ENCODE measurements at regions of chr6 and their contacts with region 1.

Region 1: DNA sequence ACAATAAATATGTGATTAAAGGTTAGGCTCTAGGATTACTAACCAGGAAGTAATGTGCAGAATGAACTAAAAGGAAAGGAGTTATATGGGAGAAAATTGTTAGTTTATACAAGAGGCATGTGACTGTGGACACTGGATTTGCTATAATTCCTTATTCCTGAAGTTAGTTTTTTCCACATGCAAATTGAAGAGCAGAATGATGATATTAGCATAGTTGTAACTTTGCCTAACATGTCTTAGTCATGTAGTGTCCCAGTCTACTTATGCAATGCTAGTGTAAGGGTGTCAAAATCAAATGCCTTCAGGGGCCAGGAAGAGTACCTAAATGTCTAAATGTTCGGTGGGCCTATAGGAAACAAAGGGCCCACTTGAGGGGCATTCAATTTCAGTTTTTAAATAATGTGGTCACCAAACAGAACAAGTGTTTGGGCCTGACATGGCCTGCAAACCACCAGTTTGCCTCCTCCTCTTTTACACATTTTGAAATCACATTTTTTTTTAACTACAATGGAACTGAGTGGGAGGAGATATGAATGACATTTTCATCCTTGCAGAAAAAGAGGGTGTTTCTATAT is 28.0 kb upstream of the CEP85L start:
- DNase-seq: no peak
- H3K4me3 Mint-ChIP-seq: no peak overlapping the region
- H3K27ac Mint-ChIP-seq: peak overlapping the region; percentile 43
- H3K4me1 Mint-ChIP-seq: peaks cover 45% of the 10 kb centered on the region
- H3K27me3 Mint-ChIP-seq: no peaks in the 10 kb centered on the region

Region 2: DNA sequence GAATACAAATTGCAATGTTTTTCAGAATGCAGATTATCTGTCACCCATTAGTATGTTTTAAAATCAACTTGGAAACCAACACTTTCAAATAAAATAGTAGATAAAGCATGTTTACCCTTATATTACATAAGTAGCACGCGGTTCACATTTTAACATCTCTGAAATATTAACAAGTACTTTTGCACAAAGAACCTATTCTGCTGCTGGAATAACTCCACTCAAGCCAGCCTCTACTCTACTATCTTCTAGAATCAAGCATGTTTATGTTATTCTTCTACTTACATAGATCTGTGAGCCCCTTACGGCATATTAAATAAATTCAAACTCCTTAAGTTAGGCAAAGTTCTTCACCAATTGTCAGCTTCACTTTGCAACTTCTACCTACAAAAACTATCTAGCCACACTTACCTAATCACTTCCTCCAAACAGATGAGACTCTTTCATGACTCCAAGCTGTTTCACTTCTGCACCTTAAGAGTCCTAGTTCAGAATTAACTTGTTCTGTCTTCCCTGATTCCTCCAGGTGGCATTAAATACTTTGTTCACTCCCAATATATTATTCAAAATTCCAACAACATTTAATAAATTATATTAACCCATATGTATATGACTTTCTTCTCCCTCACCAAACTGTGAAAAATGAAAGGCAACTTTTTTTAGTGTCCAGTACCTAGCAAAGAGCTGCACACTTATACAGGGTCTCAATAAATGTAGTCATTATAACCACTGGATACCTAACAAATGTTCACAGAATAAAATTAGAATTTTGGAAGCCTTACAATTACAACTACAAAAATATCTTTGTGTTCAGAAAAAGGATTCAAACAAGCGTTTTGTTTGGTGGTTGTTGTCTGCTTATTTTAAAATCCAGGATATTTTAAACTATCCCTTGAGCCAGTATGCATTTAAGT is 40.1 kb before region 1 on chr6:
- CTCF ChIA-PET with region 1: no interaction called
- POLR2A ChIA-PET with region 1: no interaction called
- intact Hi-C with region 1: no loop called
- DNase-seq: no peak
- H3K4me3 Mint-ChIP-seq: no peak overlapping the region
- H3K27ac Mint-ChIP-seq: no peak overlapping the region
- H3K4me1 Mint-ChIP-seq: peaks cover 56% of the 10 kb centered on the region
- H3K27me3 Mint-ChIP-seq: no peaks in the 10 kb centered on the region

Region 3: GRCh38 chr6:118660218-118660569 is 19.2 kb before region 1 on chr6:
- CTCF ChIA-PET with region 1: interaction called, 3 read pairs
- POLR2A ChIA-PET with region 1: interaction called, 3 read pairs
- intact Hi-C with region 1: loop called (anchors 2 kb)
- DNase-seq: peak; percentile 54
- H3K4me3 Mint-ChIP-seq: peak overlapping the region; percentile 33
- H3K27ac Mint-ChIP-seq: peak overlapping the region; percentile 82
- H3K4me1 Mint-ChIP-seq: peaks cover 68% of the 10 kb centered on the region
- H3K27me3 Mint-ChIP-seq: no peaks in the 10 kb centered on the region

Region 4: DNA sequence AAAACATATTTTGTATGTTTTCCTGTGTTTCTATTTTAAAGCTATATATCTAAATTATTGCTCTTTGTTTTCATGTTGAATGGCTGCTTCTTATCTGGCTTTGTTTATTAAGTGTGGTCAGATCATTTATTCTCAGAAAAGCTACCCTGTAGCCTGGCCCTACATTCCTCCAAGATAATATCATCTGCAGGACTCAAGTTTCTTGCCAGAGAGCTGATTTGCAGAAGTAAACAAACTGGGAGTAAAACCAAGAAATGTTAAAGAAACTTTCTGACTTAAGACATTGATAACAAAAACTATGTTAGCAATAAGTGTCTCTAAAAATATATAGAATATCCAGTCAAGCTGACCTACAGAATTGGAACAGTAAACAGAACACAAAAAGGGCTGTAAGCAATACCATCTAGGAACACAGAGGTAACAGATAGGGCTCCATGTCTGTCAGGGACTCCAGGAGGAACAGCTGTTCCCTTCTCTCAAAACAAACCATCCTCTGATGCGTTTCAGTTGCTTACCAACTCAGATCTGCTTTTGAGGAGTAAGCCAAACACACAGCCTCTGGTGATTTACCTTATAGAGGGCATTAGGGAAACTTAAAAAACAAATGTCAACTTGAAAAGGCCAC is 10.5 kb before region 1 on chr6:
- CTCF ChIA-PET with region 1: interaction called, 3 read pairs
- POLR2A ChIA-PET with region 1: interaction called, 4 read pairs
- intact Hi-C with region 1: loop called (anchors 1 kb)
- DNase-seq: no peak
- H3K4me3 Mint-ChIP-seq: no peak overlapping the region
- H3K27ac Mint-ChIP-seq: no peak overlapping the region
- H3K4me1 Mint-ChIP-seq: peaks cover 79% of the 10 kb centered on the region
- H3K27me3 Mint-ChIP-seq: no peaks in the 10 kb centered on the region

Region 5: DNA sequence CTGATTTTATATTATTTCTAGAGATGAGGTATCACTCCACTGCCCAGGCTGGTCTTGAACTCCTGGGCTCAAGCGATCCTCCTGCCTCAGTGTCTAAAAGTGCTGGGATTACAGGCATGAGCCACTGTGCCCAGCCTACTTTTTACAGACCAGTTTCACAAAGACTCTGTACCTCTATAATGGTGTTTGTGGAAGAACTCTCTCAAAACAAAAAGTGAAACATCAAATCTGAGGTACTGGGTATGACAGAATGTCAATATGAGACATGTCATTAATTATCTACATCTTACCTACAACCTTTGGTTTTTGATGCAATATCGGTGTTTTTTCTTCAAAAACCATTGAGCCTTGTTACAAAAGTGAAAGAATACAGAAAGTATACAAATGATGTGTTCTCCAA is 304.9 kb after region 1 on chr6:
- CTCF ChIA-PET with region 1: no interaction called
- POLR2A ChIA-PET with region 1: no interaction called
- intact Hi-C with region 1: no loop called
- DNase-seq: no peak
- H3K4me3 Mint-ChIP-seq: no peak overlapping the region
- H3K27ac Mint-ChIP-seq: no peak overlapping the region
- H3K4me1 Mint-ChIP-seq: no peaks in the 10 kb centered on the region
- H3K27me3 Mint-ChIP-seq: no peaks in the 10 kb centered on the region

Region 6: DNA sequence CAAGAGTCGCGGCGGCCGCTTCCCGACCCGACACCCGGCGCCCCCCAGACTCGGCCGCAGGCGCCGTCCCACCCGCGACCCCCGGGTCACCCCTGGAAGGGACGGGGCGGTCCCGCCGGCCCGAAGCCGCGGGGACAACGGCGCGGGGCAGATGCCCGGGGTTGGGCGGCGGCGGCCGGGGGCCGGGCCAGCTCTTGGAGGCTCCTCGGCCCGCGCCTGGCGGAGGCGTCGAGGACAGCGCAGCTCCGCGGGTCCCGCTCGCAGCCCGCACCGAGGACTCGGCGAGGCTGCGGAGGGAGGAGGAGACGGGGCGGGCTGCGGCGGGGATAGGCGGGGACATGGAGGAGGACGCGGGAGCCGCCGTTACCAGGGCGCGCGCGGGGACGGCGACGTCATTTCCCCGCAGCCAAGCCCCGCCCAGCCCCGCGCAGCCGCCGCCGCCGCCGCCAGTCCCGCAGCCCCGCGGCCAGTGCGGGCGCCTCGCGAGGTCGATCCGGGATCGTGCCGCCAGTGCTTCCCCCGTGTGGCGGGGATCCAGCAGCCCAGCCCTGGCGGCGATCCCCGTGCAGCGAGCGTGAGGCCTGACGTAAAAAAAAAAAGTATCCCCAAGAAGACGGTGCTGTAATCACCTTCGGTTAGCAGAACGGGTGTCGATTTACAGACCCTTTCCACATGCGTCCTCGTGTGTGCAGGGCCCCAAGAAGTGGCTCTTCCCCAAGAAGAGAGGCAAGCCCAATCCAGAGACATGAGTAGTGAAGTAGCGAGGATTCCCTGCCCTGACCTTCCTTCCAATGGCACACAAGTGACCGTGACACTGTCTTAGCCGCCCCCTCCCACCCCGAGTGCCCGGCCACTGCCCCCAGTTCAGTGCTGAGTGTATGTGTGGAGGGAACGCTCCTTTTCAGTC is 399.2 kb after region 1 on chr6 and contains the start of gene FAM184A:
- CTCF ChIA-PET with region 1: no interaction called
- POLR2A ChIA-PET with region 1: no interaction called
- intact Hi-C with region 1: no loop called
- DNase-seq: peak; percentile 77
- H3K4me3 Mint-ChIP-seq: peak within 1 kb of the TSS; percentile 88
- H3K27ac Mint-ChIP-seq: peak within 1 kb of the TSS; percentile 90
- H3K4me1 Mint-ChIP-seq: peaks cover 46% of the 10 kb centered on the region
- H3K27me3 Mint-ChIP-seq: no peaks in the 10 kb centered on the region
- total RNA-seq, gene FAM184A: 7.6 to 10.8 TPM